Activated CD4-positive, alpha-beta memory T cell treated with anti-CD3 and anti-CD28 coated beads for 36 hours (primary cell): ENCODE measurements at regions of chr6 and their contacts with region 1.

Region 1: DNA sequence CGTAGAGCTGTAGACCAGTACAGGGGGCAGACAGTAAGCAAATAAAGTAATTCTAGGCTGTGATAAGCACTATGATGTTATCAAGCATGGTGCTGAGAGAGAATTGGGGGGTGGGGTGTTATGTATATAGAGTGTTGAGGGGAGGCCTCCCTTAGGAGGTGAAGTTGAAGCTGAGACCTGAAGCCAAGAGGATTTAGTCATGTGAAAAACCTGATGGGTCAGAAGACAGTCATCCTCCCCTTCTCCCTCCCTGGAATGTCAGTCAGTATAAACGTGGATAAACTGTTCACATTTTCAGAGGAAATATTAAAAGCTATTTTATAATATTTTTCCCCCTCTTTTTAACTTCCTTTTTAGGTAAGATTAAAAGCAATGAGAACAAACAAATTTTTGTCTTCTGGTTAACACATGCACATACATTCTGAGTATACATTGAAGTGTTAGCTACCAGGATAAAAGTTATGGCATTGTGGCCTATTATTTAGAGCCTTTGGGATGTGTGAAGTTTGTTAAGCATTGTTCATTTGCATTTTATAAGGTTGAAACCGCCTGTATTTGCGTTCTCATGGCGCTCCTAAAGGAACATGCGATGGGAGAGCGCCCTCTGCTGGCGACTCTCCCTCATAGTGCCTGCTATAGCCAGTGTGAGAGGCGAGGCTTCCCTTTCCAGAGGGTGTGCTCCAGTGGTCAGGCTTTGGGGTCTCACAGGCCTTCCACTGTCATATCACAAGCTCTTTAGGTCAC is 35.4 kb upstream of the MAPK13 start:
- DNase-seq: peak; percentile 89
- H3K4me3 Mint-ChIP-seq: no peak overlapping the region
- H3K27ac Mint-ChIP-seq: peak overlapping the region; percentile 67
- H3K4me1 Mint-ChIP-seq: peaks cover 28% of the 10 kb centered on the region
- H3K27me3 Mint-ChIP-seq: no peaks in the 10 kb centered on the region

Region 2: GRCh38 chr6:36033935-36034334 is 61.0 kb before region 1 on chr6:
- CTCF ChIA-PET with region 1: interaction called, 237 read pairs
- POLR2A ChIA-PET with region 1: interaction called, 22 read pairs
- intact Hi-C with region 1: no loop called
- DNase-seq: peak; percentile 62
- H3K4me3 Mint-ChIP-seq: no peak overlapping the region
- H3K27ac Mint-ChIP-seq: no peak overlapping the region
- H3K4me1 Mint-ChIP-seq: peaks cover 68% of the 10 kb centered on the region
- H3K27me3 Mint-ChIP-seq: no peaks in the 10 kb centered on the region

Region 3: GRCh38 chr6:36067374-36068011 is 27.4 kb before region 1 on chr6:
- CTCF ChIA-PET with region 1: interaction called, 20 read pairs
- POLR2A ChIA-PET with region 1: no interaction called
- intact Hi-C with region 1: loop called (anchors 2 kb)
- DNase-seq: no peak
- H3K4me3 Mint-ChIP-seq: no peak overlapping the region
- H3K27ac Mint-ChIP-seq: peak overlapping the region; percentile 42
- H3K4me1 Mint-ChIP-seq: peaks cover 48% of the 10 kb centered on the region
- H3K27me3 Mint-ChIP-seq: no peaks in the 10 kb centered on the region

Region 4: GRCh38 chr6:36083446-36083845 is 11.5 kb before region 1 on chr6:
- CTCF ChIA-PET with region 1: interaction called, 28 read pairs
- POLR2A ChIA-PET with region 1: no interaction called
- intact Hi-C with region 1: no loop called
- DNase-seq: no peak
- H3K4me3 Mint-ChIP-seq: no peak overlapping the region
- H3K27ac Mint-ChIP-seq: no peak overlapping the region
- H3K4me1 Mint-ChIP-seq: peaks cover 11% of the 10 kb centered on the region
- H3K27me3 Mint-ChIP-seq: no peaks in the 10 kb centered on the region

Region 5: GRCh38 chr6:36114798-36115408 is 20.0 kb after region 1 on chr6:
- CTCF ChIA-PET with region 1: interaction called, 25 read pairs
- POLR2A ChIA-PET with region 1: no interaction called
- intact Hi-C with region 1: loop called (anchors 1 kb)
- DNase-seq: no peak
- H3K4me3 Mint-ChIP-seq: no peak overlapping the region
- H3K27ac Mint-ChIP-seq: peak overlapping the region; percentile 77
- H3K4me1 Mint-ChIP-seq: peaks cover 64% of the 10 kb centered on the region
- H3K27me3 Mint-ChIP-seq: no peaks in the 10 kb centered on the region

Region 6: DNA sequence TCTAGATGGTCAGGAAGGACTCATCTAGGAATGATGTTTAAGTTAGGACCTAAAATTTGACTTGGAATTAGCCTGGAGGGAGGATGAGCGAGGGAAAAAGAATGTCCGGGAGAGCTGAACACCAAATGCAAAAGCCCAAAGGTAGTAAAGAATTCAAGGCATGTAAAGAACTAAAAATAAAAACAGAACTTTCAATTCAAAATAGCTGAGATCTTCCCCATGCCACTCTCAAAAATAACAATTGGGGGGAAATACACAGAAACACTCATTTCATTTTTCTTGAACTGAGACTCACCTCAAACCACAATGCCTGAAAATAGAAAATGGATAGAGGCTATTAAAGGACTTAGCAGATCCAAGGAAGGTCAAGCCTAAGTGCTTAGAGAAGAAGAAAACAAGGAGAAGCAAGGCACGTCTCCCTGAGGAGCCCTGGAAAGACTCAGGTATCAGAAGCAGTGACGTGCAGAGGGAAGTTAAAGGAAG is 337.3 kb after region 1 on chr6:
- CTCF ChIA-PET with region 1: no interaction called
- POLR2A ChIA-PET with region 1: no interaction called
- intact Hi-C with region 1: no loop called
- DNase-seq: no peak
- H3K4me3 Mint-ChIP-seq: no peak overlapping the region
- H3K27ac Mint-ChIP-seq: no peak overlapping the region
- H3K4me1 Mint-ChIP-seq: peaks cover 13% of the 10 kb centered on the region
- H3K27me3 Mint-ChIP-seq: no peaks in the 10 kb centered on the region

Region 7: GRCh38 chr6:36478051-36478526 is 383.2 kb after region 1 on chr6:
- CTCF ChIA-PET with region 1: no interaction called
- POLR2A ChIA-PET with region 1: no interaction called
- intact Hi-C with region 1: no loop called
- DNase-seq: no peak
- H3K4me3 Mint-ChIP-seq: no peak overlapping the region
- H3K27ac Mint-ChIP-seq: no peak overlapping the region
- H3K4me1 Mint-ChIP-seq: peaks cover 9% of the 10 kb centered on the region
- H3K27me3 Mint-ChIP-seq: no peaks in the 10 kb centered on the region